ENCODE measurements at regions of chr14 and their contacts with region 1.

Region 1: DNA sequence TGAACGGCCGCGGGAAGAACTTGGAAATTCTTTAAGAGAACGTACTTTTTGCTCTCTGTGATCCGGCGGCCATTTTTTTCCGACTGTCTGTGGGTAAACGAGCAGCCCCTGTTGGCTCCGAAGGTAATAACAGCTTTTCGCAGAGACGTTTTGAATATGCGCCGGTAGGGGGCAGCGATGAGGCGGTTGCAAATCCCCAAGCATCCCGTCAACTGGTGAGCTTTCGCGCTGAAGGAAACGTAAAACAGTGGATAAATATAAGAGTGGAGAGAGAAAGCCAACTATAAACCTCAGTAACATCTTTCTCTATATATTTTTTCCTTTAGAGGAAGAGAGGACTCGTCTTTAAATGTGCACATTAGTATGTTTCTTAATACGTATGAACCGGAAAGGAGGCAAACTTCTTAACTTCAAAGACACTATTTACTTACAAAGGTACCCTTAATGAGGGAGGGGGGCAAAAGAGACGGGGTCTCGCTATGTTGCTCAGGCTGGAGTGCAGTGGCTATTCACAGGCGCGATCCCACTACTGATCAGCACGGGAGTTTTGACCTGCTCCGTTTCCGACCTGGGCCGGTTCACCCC is 9.6 kb upstream of the NEMF start:
- DNase-seq: peak; percentile 81
- H3K4me3 Mint-ChIP-seq: no peak overlapping the region
- H3K27ac Mint-ChIP-seq: no peak overlapping the region
- H3K4me1 Mint-ChIP-seq: no peaks in the 10 kb centered on the region
- H3K27me3 Mint-ChIP-seq: no peaks in the 10 kb centered on the region
- CTCF ChIP-seq: peak; percentile 100

Region 2: DNA sequence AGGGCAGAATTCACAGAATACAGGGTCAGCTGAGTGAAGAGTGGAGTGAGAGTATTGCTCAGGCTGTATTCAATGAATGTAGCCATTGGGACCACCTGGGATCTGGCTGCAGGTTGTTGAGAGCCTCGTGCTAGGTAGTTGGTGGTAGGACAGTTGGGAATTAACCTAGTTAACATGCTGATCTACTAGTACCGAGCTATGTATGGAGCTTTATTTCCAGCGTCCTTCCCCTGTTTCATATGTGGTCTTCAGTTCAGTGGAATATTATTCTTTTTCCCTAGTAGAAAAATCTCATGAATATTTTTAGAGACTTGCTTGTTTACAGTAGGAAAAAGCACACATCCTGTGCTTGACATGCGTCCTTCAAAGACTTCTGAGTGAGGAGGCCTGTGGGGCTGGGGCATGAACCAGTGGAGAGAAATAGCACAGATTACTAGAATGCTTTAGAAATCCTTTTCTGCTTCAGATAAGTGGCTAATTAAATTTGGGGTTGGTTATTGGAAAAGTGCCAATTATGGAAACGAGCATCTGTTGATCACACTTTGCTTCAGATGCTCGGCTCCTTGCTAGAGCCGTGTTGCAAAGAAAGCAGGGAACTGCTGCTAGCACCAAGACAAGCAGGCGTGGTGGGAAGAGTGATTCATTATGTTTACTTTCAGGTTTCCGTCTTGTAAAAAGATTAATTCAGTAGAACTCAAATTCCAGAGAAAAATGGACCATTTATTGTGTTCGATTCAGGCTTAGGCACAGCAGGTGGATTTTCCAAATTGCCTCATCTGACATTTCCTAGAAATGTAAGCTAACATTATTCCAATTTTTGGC is 84.3 kb after region 1 on chr14:
- CTCF ChIA-PET with region 1: interaction called, 42 read pairs
- POLR2A ChIA-PET with region 1: interaction called, 33 read pairs
- intact Hi-C with region 1: no loop called
- DNase-seq: peak; percentile 72
- H3K4me3 Mint-ChIP-seq: peak overlapping the region; percentile 42
- H3K27ac Mint-ChIP-seq: peak overlapping the region; percentile 81
- H3K4me1 Mint-ChIP-seq: peaks cover 38% of the 10 kb centered on the region
- H3K27me3 Mint-ChIP-seq: no peaks in the 10 kb centered on the region
- CTCF ChIP-seq: no peak

Region 3: GRCh38 chr14:50003213-50004031 is 141.2 kb after region 1 on chr14:
- CTCF ChIA-PET with region 1: interaction called, 33 read pairs
- POLR2A ChIA-PET with region 1: interaction called, 176 read pairs
- intact Hi-C with region 1: loop called (anchors 1 kb)
- DNase-seq: peak; percentile 72
- H3K4me3 Mint-ChIP-seq: peak overlapping the region; percentile 73
- H3K27ac Mint-ChIP-seq: peak overlapping the region; percentile 95
- H3K4me1 Mint-ChIP-seq: peaks cover 45% of the 10 kb centered on the region
- H3K27me3 Mint-ChIP-seq: no peaks in the 10 kb centered on the region
- CTCF ChIP-seq: no peak

Region 4: GRCh38 chr14:50038398-50039119 is 176.4 kb after region 1 on chr14:
- CTCF ChIA-PET with region 1: interaction called, 18 read pairs
- POLR2A ChIA-PET with region 1: interaction called, 33 read pairs
- intact Hi-C with region 1: loop called (anchors 1 kb)
- DNase-seq: peak; percentile 94
- H3K4me3 Mint-ChIP-seq: peak overlapping the region; percentile 40
- H3K27ac Mint-ChIP-seq: peak overlapping the region; percentile 89
- H3K4me1 Mint-ChIP-seq: peaks cover 43% of the 10 kb centered on the region
- H3K27me3 Mint-ChIP-seq: no peaks in the 10 kb centered on the region
- CTCF ChIP-seq: peak; percentile 16

Region 5: GRCh38 chr14:50099335-50099734 is 237.2 kb after region 1 on chr14:
- CTCF ChIA-PET with region 1: interaction called, 178 read pairs
- POLR2A ChIA-PET with region 1: interaction called, 32 read pairs
- intact Hi-C with region 1: no loop called
- DNase-seq: peak; percentile 47
- H3K4me3 Mint-ChIP-seq: no peak overlapping the region
- H3K27ac Mint-ChIP-seq: peak overlapping the region; percentile 33
- H3K4me1 Mint-ChIP-seq: peaks cover 11% of the 10 kb centered on the region
- H3K27me3 Mint-ChIP-seq: no peaks in the 10 kb centered on the region
- CTCF ChIP-seq: no peak

Region 6: DNA sequence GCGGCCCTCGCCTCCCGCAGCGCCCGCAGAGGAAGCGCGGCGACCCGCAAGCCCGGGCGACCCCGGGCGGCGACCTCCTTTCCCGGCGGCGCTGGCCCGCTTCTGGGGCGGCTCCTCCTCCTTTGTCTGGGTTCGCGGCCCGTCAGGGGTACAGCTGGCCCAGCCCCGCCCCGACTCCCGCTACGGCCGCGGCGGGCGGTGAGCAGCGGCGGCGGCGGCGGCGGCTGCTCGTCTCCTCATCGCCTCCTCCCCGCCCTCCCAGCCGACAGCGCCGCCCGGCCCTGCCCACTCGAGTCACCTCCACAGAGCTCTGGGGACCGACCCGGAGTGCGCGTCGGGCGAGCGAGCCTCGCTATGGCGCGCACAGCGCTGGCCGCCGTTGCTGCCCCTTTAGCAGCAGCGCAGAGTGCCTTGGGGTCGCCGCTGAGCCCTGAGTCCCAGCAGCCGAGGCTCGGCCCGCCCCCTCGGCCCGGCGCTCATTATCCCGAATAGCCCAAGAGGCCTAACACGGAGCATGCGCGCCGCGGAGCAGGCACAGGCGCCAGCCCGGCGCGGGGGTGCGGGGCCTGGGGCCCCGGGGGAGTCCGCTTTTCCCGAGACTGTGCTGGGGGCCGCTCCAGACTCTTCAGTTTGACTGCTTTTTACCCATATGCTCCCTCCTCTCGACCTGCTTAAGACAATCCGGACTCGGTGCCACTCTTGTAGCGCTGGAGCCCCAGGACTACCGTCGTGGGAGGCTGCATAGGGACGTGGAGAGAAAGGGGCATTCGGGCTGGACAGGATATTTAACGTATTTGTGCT is 369.5 kb after region 1 on chr14 and contains the start of gene SOS2:
- CTCF ChIA-PET with region 1: interaction called, 9 read pairs
- POLR2A ChIA-PET with region 1: interaction called, 4 read pairs
- intact Hi-C with region 1: loop called (anchors 5 kb)
- DNase-seq: peak; percentile 83
- H3K4me3 Mint-ChIP-seq: peak within 1 kb of the TSS; percentile 84
- H3K27ac Mint-ChIP-seq: peak within 1 kb of the TSS; percentile 95
- H3K4me1 Mint-ChIP-seq: peaks cover 7% of the 10 kb centered on the region
- H3K27me3 Mint-ChIP-seq: no peaks in the 10 kb centered on the region
- CTCF ChIP-seq: no peak
- total RNA-seq, gene SOS2: 19.0 and 21.5 TPM in 2 replicates